Right ventricle myocardium inferior (tissue), 1 donor: ENCODE measurements at regions of chr11 and their contacts with region 1.

Region 1: DNA sequence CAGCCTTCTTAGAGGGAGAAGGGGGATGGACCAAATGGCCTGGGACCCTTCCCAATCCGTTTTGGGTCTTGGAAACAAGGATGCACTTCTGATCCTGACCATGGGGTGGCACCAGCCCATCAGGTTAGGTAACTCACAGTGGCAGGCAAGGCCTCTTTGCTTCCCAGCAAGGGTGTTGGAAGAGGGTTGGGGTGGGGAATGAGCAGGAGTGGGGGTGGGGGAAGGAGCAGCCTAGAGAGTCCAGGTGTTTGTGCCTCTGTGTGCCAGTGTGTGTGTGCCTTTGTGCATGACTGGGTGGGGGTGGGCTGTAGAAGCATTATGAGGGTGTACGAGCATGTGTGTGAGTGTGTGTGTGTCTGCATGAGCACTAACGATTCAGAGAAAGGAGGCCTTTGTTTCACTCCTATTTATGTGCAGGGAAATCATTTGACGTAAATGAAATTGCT is 213.1 kb downstream of the INSC start:
- DNase-seq: no peak
- ATAC-seq: peak; percentile 77

Region 2: DNA sequence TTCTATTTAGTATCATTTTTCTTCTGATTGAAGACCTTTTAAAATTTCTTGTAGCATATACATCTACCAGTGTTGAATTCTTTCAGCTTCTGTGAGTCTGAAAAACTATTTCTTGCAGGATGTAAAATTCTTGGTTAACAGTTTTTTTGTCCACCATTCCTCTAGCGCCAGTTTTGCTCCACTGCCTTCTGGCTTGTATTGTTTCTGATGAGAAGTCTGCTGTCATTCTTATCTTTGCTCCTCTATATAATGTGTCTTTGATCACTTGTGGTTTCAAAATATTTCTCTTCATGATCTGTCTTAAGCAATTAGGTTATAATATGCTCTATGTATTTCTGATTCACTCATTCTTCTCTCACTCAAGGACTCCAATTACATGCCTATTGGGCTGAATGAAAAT is 60.8 kb before region 1 on chr11:
- intact Hi-C with region 1: no loop called
- DNase-seq: no peak
- ATAC-seq: no peak

Region 3: DNA sequence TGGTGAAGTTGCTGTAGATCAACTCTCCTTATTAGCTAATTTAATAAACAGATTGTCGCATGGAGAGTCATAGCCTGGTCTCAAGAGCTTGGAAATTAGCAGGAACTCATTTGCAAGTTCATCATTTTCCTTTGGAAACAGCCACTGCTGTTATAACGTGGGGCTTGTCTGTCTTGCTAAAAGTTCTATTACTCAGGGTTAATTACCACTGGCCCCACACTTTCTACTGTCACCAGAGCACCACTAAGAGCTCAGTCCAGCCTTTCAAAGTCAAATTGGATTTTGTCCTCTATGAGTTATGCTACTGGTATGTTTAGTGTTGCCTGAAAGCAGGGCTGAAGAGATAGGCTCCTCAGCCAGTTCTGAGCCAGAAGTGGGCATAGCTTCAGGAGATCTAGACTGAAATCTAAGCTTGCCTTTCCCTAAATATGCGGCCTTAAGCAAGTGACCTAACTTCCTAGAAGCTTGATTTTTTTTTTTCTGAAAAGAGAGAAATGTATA is 79.1 kb after region 1 on chr11:
- intact Hi-C with region 1: no loop called
- DNase-seq: no peak
- ATAC-seq: no peak

Region 4: GRCh38 chr11:15757048-15757698 is 429.4 kb after region 1 on chr11:
- intact Hi-C with region 1: no loop called
- DNase-seq: no peak
- ATAC-seq: no peak

Region 5: DNA sequence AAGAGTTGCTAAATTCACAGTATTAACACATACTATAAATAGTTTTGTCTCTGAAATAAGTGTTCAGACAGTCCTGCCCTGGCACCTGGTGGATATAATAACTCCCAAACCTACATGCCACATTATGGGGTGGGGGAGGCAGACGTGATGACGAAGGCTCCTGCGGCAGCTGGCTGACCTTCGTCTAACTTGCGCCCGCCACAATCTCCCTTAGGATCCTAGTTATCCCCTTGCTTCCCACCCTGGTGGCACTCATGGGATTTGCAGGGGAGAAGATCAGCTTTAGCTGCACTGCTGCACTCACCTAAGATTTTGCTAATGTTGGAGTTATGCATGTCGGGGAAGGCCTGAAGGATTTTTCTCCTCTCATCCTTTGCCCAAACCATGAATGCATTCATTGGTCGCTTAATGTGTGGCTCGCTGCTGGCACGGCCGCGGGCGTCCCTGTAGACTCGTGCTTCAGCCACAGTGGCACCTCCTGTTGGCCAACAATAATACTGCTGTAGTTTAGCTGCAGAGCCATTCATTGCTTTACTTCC is 661.0 kb after region 1 on chr11:
- intact Hi-C with region 1: loop called (anchors 5 kb)
- DNase-seq: peak; percentile 51
- ATAC-seq: peak; percentile 81